ENCODE measurements at regions of chr1 and their contacts with region 1.

Region 1: GRCh38 chr1:247131236-247131635 is 27.1 kb upstream of the ZNF669 start:
- DNase-seq: no peak
- H3K4me3 ChIP-seq: no peak overlapping the region
- H3K27ac ChIP-seq: no peak overlapping the region
- H3K4me1 ChIP-seq: peaks cover 0 to 3% (median 0%) of the 10 kb centered on the region in 4 experiments; a peak in 1 of 7 replicates
- H3K27me3 ChIP-seq: no peaks in the 10 kb centered on the region
- CTCF ChIP-seq: no peak
- EP300 ChIP-seq: no peak
- POLR2A ChIP-seq: no peak
- RAD21 ChIP-seq: no peak

Region 2: GRCh38 chr1:247172996-247173395 is 41.8 kb after region 1 on chr1:
- CTCF ChIA-PET with region 1: no interaction called
- POLR2A ChIA-PET with region 1: interaction called, 13 read pairs
- DNase-seq: no peak
- H3K4me3 ChIP-seq: no peak overlapping the region
- H3K27ac ChIP-seq: no peak overlapping the region
- H3K4me1 ChIP-seq: 0 out of 7 replicates have a peak, but pooled peaks cover 0 to 2% (median 0%) of the 10 kb centered on the region in 4 experiments
- H3K27me3 ChIP-seq: no peaks in the 10 kb centered on the region
- CTCF ChIP-seq: no peak
- EP300 ChIP-seq: no peak
- POLR2A ChIP-seq: no peak
- RAD21 ChIP-seq: no peak